ENCODE measurements at regions of chr3 and their contacts with region 1.

Region 1: DNA sequence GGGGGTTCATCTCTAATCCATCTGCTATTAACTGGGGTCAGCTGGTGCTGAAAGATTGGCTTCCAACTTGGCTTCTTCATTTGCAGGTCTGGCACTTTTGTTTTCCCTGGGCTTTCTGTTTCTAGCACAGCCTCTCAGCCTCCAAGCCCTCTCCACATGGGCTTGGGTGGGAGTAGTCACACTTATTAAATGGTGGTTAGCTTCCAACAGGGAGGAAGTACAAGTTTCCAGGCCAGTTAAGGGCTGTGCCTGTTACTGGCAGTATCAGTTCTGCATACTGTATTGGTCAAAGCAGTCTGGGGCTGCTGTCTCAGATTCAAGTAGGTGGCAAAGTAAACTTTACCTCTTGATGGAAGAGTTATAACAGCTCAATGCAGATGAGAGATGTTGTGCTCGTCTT is 627.1 kb upstream of the CCDC54 start:
- DNase-seq: no peak

Region 2: DNA sequence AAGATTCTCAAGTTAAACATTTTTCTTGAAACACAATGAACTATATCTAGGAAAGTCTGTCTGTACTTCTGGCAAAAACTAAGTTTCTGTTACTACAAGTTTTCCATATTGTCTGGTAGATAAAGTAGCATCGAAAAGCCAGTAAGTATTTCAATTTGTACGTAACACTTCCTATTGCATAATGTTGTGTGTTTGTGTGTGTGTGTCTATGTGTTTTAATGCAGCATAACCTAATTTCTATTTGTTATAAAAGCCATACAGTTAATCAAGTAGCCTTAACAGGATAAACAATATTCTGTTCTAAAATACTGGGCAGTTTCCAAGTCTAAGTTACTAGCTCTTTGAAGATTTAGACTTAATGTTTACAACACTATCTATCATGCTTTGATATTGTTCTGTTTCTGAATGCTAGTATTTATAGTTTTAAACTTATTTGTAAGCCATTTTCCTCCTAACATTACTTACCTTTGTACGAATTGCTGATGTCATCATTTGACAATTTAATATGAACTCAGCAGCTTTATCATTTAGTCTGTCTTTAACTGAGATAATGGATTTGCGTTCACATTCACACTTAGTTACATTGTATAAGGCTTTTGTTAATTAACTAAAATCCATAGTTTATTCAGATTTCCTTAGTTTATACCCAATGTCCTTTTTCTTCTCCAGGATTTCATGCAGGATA is 1045.2 kb before region 1 on chr3:
- intact Hi-C with region 1: loop called in 1 of 2 experiments (anchors 5 kb)
- DNase-seq: no peak

Region 3: GRCh38 chr3:106699122-106699521 is 51.0 kb before region 1 on chr3:
- intact Hi-C with region 1: no loop called
- DNase-seq: no peak

Measured in posterior vena cava (tissue), 2 donors.